Psoas muscle (tissue), 8 donors: ENCODE measurements at regions of chr12 and their contacts with region 1.

Region 1: DNA sequence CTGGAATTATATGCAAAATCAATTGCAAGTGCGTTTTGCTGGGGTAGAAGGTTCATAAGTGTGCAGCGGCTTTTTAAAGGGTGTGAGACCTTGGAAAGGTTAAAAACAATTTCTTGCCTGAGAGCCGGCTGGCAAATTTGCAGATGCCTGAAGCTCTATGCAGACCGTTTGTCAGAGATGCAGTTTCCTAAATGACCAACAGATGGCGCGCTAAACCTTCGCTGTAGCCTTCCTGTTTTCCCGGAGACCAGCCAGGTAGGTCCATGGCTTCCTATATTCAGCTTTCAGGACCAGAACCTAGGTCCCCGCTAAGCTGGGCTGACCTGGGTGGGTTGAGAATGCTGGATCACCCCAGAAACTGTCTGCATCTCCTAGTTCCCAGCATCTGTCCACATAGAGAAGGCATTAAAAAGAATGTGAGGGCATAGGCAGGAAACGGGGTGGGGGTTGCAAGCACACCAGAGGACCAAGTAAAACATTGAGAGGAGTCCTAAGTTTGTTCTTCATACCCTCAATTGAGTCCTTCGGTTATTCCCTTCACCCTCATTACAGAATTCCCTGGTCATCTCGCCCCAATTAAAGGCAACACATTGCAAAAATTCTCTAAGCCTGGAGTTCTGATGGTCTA is 5.7 kb upstream of the NOS1 start:
- DNase-seq: peak; percentile 54 to 72
- ATAC-seq: peak; percentile 79 to 87 (median 83)
- H3K4me3 ChIP-seq: no peak overlapping the region
- H3K27ac ChIP-seq: no peak overlapping the region
- H3K4me1 ChIP-seq: no peaks in the 10 kb centered on the region
- H3K27me3 ChIP-seq: peaks cover 0 to 4% (median 0%) of the 10 kb centered on the region in 3 donors
- CTCF ChIP-seq: peak; percentile 90

Region 2: DNA sequence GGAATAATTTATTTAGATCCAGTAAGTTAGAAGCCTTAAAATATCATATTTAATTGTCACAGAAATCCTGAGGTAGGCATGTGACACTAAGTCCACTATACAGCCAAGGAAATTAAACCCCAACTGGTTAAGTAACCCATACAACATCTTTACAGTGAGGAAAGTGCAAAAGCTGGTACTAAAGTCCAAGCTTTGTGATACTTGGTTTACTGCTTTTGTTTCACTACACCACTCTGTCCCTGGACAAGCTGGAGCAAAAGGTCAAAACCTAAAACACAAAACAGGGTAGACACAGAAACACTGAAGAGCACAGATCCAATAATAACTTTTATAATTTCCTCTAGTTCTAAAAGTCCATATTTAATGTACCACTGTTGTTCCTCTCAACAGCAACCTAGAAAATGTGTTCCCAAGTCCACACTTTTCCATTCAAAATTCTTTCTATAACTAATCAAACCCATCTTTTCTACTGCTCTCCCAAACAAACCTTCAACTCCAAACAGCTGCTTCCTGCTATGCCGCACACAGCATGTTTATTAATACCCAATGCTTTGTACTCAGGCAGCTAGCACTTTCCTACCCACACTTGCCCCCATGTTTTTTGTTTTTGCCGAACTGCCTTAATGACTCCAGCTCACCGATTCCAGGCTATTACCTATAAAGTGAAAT is 1180.5 kb before region 1 on chr12:
- intact Hi-C with region 1: no loop called
- DNase-seq: no peak
- ATAC-seq: peak; percentile 69 to 80 (median 77)
- H3K4me3 ChIP-seq: peak overlapping the region; percentile 13
- H3K27ac ChIP-seq: peak overlapping the region; percentile 60
- H3K4me1 ChIP-seq: peaks cover 75% of the 10 kb centered on the region
- H3K27me3 ChIP-seq: no peaks in the 10 kb centered on the region
- CTCF ChIP-seq: no peak

Region 3: GRCh38 chr12:116784238-116784612 is 582.9 kb before region 1 on chr12:
- intact Hi-C with region 1: no loop called
- DNase-seq: no peak
- ATAC-seq: no peak
- H3K4me3 ChIP-seq: no peak overlapping the region
- H3K27ac ChIP-seq: no peak overlapping the region
- H3K4me1 ChIP-seq: no peaks in the 10 kb centered on the region
- H3K27me3 ChIP-seq: no peaks in the 10 kb centered on the region
- CTCF ChIP-seq: no peak

Region 4: GRCh38 chr12:117439531-117440001 is 72.4 kb after region 1 on chr12:
- intact Hi-C with region 1: loop called (anchors 2 to 5 kb)
- DNase-seq: peak; percentile 62 to 91
- ATAC-seq: peak; percentile 78 to 82 (median 80)
- H3K4me3 ChIP-seq: peak overlapping the region; percentile 53
- H3K27ac ChIP-seq: peak overlapping the region; percentile 69
- H3K4me1 ChIP-seq: peaks cover 36% of the 10 kb centered on the region
- H3K27me3 ChIP-seq: no peaks in the 10 kb centered on the region
- CTCF ChIP-seq: peak; percentile 17

Region 5: GRCh38 chr12:117671734-117672133 is 304.6 kb after region 1 on chr12:
- intact Hi-C with region 1: loop called in 1 of 2 experiments (anchors 5 kb)
- DNase-seq: peak in 1 of 2 donors; percentile 23
- ATAC-seq: peak in 2 of 4 donors; percentile 57 to 58
- H3K4me3 ChIP-seq: no peak overlapping the region
- H3K27ac ChIP-seq: no peak overlapping the region
- H3K4me1 ChIP-seq: no peaks in the 10 kb centered on the region
- H3K27me3 ChIP-seq: peaks cover 0 to 19% (median 3%) of the 10 kb centered on the region in 3 donors
- CTCF ChIP-seq: peak; percentile 42